Activated B cell treated with CpG ODN at 0.5 μM for 24 hours (primary cell): ENCODE measurements at regions of chr19 and their contacts with region 1.

Region 1: GRCh38 chr19:45862564-45863334 is at the start of gene SYMPK:
- DNase-seq: peak; percentile 96
- ATAC-seq: peak; percentile 94
- H3K4me3 Mint-ChIP-seq: peak within 1 kb of the TSS; percentile 96
- H3K27ac Mint-ChIP-seq: peak within 1 kb of the TSS; percentile 96
- H3K4me1 Mint-ChIP-seq: peaks cover 37% of the 10 kb centered on the region
- H3K27me3 Mint-ChIP-seq: peaks cover 19% of the 10 kb centered on the region
- CTCF ChIP-seq: no peak
- total RNA-seq, gene SYMPK: 131 and 150 TPM in 2 replicates

Region 2: GRCh38 chr19:45584332-45585157 is 278.2 kb before region 1 on chr19 and contains the start of gene OPA3:
- CTCF ChIA-PET with region 1: no interaction called
- POLR2A ChIA-PET with region 1: interaction called, 4 read pairs
- intact Hi-C with region 1: loop called (anchors 1 kb)
- DNase-seq: peak; percentile 94
- ATAC-seq: peak; percentile 89
- H3K4me3 Mint-ChIP-seq: peak within 1 kb of the TSS; percentile 96
- H3K27ac Mint-ChIP-seq: peak within 1 kb of the TSS; percentile 98
- H3K4me1 Mint-ChIP-seq: peaks cover 13% of the 10 kb centered on the region
- H3K27me3 Mint-ChIP-seq: peaks cover 5% of the 10 kb centered on the region
- CTCF ChIP-seq: no peak
- total RNA-seq, gene OPA3: 12.0 and 14.4 TPM in 2 replicates

Region 3: DNA sequence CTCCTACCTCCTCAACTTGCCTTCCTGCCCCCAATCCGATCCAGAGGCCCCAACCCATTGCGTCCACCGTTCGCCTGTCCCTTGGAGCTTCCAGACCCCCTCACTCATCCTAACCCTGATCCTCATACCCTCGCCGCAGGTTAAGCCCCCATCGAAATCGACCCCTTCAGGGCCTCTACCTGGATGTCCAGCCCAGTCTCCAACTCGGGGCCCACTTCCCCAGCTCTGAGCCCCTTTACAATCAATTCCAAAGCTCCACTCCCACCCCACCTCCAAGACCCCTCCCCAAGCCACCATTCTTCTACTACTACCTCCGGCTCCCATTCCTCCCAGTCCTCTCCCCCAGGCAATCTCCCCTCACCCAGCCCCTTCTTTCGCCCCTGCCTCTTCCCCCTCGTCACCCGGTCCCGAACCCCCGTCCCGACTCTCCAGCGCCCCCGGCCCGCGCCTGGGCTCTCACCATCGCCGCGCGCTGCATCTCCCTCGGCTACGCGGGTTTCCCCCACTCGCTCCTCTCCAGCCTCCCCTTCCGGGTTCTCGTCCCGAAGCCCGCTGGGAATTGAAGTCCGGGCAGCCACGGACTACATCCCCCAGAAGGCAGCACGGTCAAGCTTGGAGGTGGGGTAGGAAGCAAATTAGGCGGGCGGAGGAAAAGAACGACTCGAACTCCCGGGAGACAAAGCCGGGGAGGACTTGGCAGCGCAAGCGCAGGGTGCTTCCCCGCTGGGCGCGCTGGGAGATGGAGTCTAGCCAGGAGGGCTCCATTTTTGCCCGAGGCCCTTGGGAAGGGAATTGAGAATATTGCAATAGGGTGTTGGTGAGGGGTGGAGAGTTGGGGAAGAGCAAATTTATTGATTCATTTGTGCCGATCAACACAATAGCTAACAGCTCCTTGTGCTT is 132.1 kb before region 1 on chr19 and contains the start of gene FBXO46:
- CTCF ChIA-PET with region 1: no interaction called
- POLR2A ChIA-PET with region 1: interaction called, 3 read pairs
- intact Hi-C with region 1: loop called (anchors 1 kb)
- DNase-seq: peak; percentile 86
- ATAC-seq: peak; percentile 98
- H3K4me3 Mint-ChIP-seq: peak within 1 kb of the TSS; percentile 95
- H3K27ac Mint-ChIP-seq: peak within 1 kb of the TSS; percentile 93
- H3K4me1 Mint-ChIP-seq: peaks cover 25% of the 10 kb centered on the region
- H3K27me3 Mint-ChIP-seq: no peaks in the 10 kb centered on the region
- CTCF ChIP-seq: no peak
- total RNA-seq, gene FBXO46: 36.3 and 44.0 TPM in 2 replicates

Region 4: GRCh38 chr19:45817010-45817724 is 45.6 kb before region 1 on chr19:
- CTCF ChIA-PET with region 1: no interaction called
- POLR2A ChIA-PET with region 1: interaction called, 9 read pairs
- intact Hi-C with region 1: loop called (anchors 1 kb)
- DNase-seq: peak; percentile 94
- ATAC-seq: peak; percentile 100
- H3K4me3 Mint-ChIP-seq: no peak overlapping the region
- H3K27ac Mint-ChIP-seq: peak overlapping the region; percentile 68
- H3K4me1 Mint-ChIP-seq: peaks cover 9% of the 10 kb centered on the region
- H3K27me3 Mint-ChIP-seq: no peaks in the 10 kb centered on the region
- CTCF ChIP-seq: peak; percentile 65

Region 5: DNA sequence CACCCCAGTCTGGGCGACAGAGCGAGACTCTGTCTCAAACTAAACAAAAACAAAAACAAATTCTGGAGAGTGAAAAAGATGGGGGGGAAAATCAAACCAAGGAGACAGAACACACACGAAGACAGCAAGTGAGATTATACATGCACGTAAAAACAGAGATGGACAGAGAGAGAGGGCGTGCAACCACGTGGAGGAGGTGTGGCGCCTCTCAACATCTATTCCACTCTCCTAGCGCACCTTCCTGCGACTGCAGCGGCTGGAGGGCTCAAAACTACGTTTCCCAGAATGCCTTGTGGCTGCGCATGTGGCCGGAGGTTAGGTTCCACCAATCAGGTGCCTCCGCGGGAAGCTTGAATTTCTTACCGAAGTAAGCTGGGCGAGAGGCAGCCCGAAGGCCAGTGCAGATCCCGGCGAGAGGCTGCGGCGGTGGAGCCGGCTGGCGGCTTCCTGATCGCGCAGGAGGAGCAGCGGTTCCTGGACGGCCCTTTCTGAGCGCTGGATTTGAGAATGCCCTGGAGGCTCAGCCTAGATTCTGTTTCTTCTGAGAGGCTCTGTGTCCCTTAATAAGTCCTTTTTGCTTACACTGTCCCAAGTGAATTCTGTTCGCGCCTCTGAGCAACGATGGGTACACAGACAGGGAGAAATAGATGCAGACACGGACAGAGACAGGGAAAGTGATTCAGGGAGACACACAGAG is 65.0 kb after region 1 on chr19:
- CTCF ChIA-PET with region 1: no interaction called
- POLR2A ChIA-PET with region 1: interaction called, 4 read pairs
- intact Hi-C with region 1: loop called (anchors 1 kb)
- DNase-seq: peak; percentile 76
- ATAC-seq: peak; percentile 100
- H3K4me3 Mint-ChIP-seq: no peak overlapping the region
- H3K27ac Mint-ChIP-seq: no peak overlapping the region
- H3K4me1 Mint-ChIP-seq: peaks cover 9% of the 10 kb centered on the region
- H3K27me3 Mint-ChIP-seq: peaks cover 14% of the 10 kb centered on the region
- CTCF ChIP-seq: no peak

Region 6: GRCh38 chr19:46265217-46265828 is 402.6 kb after region 1 on chr19:
- CTCF ChIA-PET with region 1: no interaction called
- POLR2A ChIA-PET with region 1: no interaction called
- intact Hi-C with region 1: loop called (anchors 5 kb)
- DNase-seq: peak; percentile 25
- ATAC-seq: peak; percentile 67
- H3K4me3 Mint-ChIP-seq: no peak overlapping the region
- H3K27ac Mint-ChIP-seq: no peak overlapping the region
- H3K4me1 Mint-ChIP-seq: peaks cover 9% of the 10 kb centered on the region
- H3K27me3 Mint-ChIP-seq: peaks cover 21% of the 10 kb centered on the region
- CTCF ChIP-seq: peak; percentile 41